ENCODE measurements at regions of chr10 and their contacts with region 1.

Region 1: GRCh38 chr10:114876602-114877300 is 55.2 kb downstream of the FHIP2A start:
- DNase-seq: peak; percentile 78
- ATAC-seq: peak; percentile 91
- H3K4me3 Mint-ChIP-seq: no peak overlapping the region
- H3K27ac Mint-ChIP-seq: no peak overlapping the region
- H3K4me1 Mint-ChIP-seq: peaks cover 7% of the 10 kb centered on the region
- H3K27me3 Mint-ChIP-seq: peaks cover 35% of the 10 kb centered on the region

Region 2: GRCh38 chr10:114550756-114551635 is 325.8 kb before region 1 on chr10:
- CTCF ChIA-PET with region 1: interaction called, 3 read pairs
- POLR2A ChIA-PET with region 1: no interaction called
- intact Hi-C with region 1: loop called (anchors 1 to 2 kb)
- DNase-seq: no peak
- ATAC-seq: no peak
- H3K4me3 Mint-ChIP-seq: no peak overlapping the region
- H3K27ac Mint-ChIP-seq: no peak overlapping the region
- H3K4me1 Mint-ChIP-seq: peaks cover 28% of the 10 kb centered on the region
- H3K27me3 Mint-ChIP-seq: no peaks in the 10 kb centered on the region

Region 3: DNA sequence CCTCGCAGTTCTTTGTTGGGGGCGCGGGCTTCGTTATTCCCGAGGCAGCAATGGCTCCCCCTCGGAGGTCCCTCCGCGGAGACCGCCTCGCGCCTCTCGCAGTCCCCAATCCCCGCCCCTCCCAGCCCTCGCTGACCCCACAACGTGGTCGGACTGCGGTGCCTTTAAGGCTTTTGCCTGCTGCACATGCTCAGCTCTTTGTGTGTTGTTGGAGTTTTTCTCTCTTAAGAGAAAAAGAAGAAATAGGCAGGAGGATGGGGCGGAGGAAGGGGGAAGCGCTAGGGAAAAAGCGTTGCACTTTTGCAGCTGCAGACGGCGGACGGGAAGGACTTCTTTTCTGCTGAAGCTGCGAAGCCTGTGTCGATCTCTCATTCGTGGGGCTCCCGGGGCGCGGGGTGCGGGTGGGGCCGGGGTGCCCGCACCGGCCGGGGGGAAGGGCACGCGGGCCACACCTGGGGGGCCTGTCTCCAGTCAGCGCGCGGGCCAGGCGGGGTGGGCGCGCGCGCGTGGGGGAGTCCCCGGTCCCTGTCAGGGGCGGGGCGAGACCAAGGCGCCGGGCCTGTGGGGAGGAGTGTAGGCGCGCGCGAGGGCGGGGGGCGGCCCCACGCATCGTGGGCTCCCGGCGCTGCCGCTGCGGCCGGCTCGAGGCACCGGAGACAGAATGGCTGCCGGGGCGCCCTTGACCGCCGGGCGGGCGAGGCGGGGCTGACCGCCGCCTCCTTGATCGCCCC is 216.0 kb after region 1 on chr10:
- CTCF ChIA-PET with region 1: interaction called, 3 read pairs
- POLR2A ChIA-PET with region 1: no interaction called
- intact Hi-C with region 1: loop called in 1 of 2 experiments (anchors 1 kb)
- DNase-seq: peak; percentile 43
- ATAC-seq: peak; percentile 70
- H3K4me3 Mint-ChIP-seq: peak overlapping the region; percentile 61
- H3K27ac Mint-ChIP-seq: peak overlapping the region; percentile 19
- H3K4me1 Mint-ChIP-seq: peaks cover 10% of the 10 kb centered on the region
- H3K27me3 Mint-ChIP-seq: peaks cover 37% of the 10 kb centered on the region

Region 4: GRCh38 chr10:115129752-115130151 is 253.0 kb after region 1 on chr10:
- CTCF ChIA-PET with region 1: interaction called, 16 read pairs
- POLR2A ChIA-PET with region 1: no interaction called
- intact Hi-C with region 1: loop called (anchors 1 kb)
- DNase-seq: no peak
- ATAC-seq: no peak
- H3K4me3 Mint-ChIP-seq: no peak overlapping the region
- H3K27ac Mint-ChIP-seq: no peak overlapping the region
- H3K4me1 Mint-ChIP-seq: no peaks in the 10 kb centered on the region
- H3K27me3 Mint-ChIP-seq: peaks cover 4% of the 10 kb centered on the region

Region 5: GRCh38 chr10:115417585-115418265 is 541.0 kb after region 1 on chr10:
- CTCF ChIA-PET with region 1: no interaction called
- POLR2A ChIA-PET with region 1: no interaction called
- intact Hi-C with region 1: loop called in 1 of 2 experiments (anchors 5 kb)
- DNase-seq: peak; percentile 13
- ATAC-seq: peak; percentile 30
- H3K4me3 Mint-ChIP-seq: no peak overlapping the region
- H3K27ac Mint-ChIP-seq: no peak overlapping the region
- H3K4me1 Mint-ChIP-seq: no peaks in the 10 kb centered on the region
- H3K27me3 Mint-ChIP-seq: no peaks in the 10 kb centered on the region

Measured in activated CD4-positive, alpha-beta T cell treated with anti-CD3 and anti-CD28 coated beads for 36 hours (primary cell).